ENCODE measurements at regions of chr14 and their contacts with region 1.

Region 1: GRCh38 chr14:36647824-36648753 is 13.6 kb upstream of the PAX9 start:
- DNase-seq: peak in 1 of 2 experiments; percentile 80
- H3K4me3 ChIP-seq: peak overlapping the region; percentile 19 to 64 (median 57); a peak in 7 of 8 replicates
- H3K27ac ChIP-seq: no peak overlapping the region
- H3K4me1 ChIP-seq: peaks cover 0 to 15% (median 7%) of the 10 kb centered on the region in 4 experiments; a peak in 6 of 7 replicates
- H3K27me3 ChIP-seq: peaks cover 73 to 85% (median 82%) of the 10 kb centered on the region in 4 experiments
- CTCF ChIP-seq: peak; percentile 63 to 67 (median 64)
- EP300 ChIP-seq: no peak
- POLR2A ChIP-seq: no peak
- RAD21 ChIP-seq: peak; percentile 75 to 77

Region 2: GRCh38 chr14:36634248-36634647 is 13.8 kb before region 1 on chr14:
- CTCF ChIA-PET with region 1: interaction called, 12 read pairs
- POLR2A ChIA-PET with region 1: no interaction called
- DNase-seq: no peak
- H3K4me3 ChIP-seq: no peak overlapping the region
- H3K27ac ChIP-seq: no peak overlapping the region
- H3K4me1 ChIP-seq: no peaks in the 10 kb centered on the region
- H3K27me3 ChIP-seq: no peaks in the 10 kb centered on the region; a peak in 1 of 7 replicates
- CTCF ChIP-seq: no peak
- EP300 ChIP-seq: no peak
- POLR2A ChIP-seq: no peak
- RAD21 ChIP-seq: no peak

Region 3: DNA sequence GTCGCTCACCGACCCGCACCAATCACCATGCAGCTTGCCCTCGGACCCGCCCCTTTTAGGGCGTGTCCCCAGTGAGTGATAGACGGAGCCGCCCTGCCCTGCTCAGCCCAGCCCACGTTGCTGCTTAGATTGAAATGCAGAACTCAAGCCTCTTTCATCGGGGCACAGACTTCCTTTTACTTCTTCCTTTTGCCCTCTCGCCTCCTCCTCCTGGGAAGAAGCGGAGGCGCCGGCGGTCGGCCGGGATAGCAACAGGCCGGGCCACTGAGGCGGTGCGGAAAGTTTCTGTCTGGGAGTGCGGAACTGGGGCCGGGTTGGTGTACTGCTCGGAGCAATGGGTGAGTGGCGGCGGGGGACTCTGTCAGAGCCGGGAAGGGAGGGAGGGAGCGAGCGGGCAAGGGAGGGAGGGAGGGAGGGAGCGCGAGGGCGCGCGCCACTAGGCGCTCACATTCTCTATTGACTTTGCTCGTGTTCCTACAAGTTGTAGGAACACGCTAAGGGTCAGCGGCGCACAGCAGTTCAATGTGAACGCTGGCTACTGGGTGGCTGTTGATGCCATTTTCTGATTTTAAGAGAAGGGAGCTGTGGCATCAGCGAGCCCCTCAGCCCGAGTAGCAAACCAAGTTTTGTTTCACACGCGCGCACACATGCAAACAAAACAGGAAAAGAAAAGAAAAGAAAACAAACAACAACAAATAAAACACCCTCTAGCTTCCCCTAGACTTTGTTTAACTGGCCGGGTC is 13.8 kb after region 1 on chr14 and contains the start of gene PAX9:
- CTCF ChIA-PET with region 1: interaction called, 132 read pairs
- POLR2A ChIA-PET with region 1: interaction called, 3 read pairs
- DNase-seq: peak; percentile 92 to 96
- H3K4me3 ChIP-seq: peak within 1 kb of the TSS; percentile 25 to 62 (median 38); a peak in 7 of 8 replicates
- H3K27ac ChIP-seq: no peak within 1 kb of the TSS
- H3K4me1 ChIP-seq: peaks cover 4 to 33% (median 22%) of the 10 kb centered on the region in 4 experiments
- H3K27me3 ChIP-seq: peaks cover 91 to 99% (median 94%) of the 10 kb centered on the region in 4 experiments
- CTCF ChIP-seq: no peak
- EP300 ChIP-seq: no peak
- POLR2A ChIP-seq: no peak
- RAD21 ChIP-seq: 0 out of 4 replicates have a peak, but pooled peaks of 1 of the 2 experiments have one; percentile 1
- total RNA-seq, gene PAX9: not detected in 2 replicates

Region 4: DNA sequence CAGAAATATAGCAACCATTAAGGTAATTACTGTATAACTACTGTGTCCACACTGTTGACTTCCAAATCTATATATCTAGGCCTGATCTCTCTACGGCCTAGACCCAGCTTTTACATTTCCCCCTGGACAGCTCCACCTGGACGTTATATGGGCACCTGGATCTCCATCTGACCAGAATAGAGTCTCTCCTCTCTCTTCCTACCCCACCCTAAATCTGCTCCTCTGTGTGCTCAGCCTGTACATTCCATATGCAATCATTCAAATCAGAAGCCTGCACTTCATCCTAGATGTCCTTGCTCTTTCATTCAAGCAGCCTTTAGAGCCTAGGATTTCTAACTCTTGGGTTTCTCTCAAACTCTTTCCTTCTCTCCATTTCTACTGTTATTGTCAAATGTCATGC is 268.6 kb after region 1 on chr14:
- CTCF ChIA-PET with region 1: no interaction called
- POLR2A ChIA-PET with region 1: no interaction called
- DNase-seq: no peak
- H3K4me3 ChIP-seq: no peak overlapping the region
- H3K27ac ChIP-seq: no peak overlapping the region
- H3K4me1 ChIP-seq: 0 out of 7 replicates have a peak, but pooled peaks cover 0 to 2% (median 0%) of the 10 kb centered on the region in 4 experiments
- H3K27me3 ChIP-seq: no peaks in the 10 kb centered on the region
- CTCF ChIP-seq: no peak
- EP300 ChIP-seq: no peak
- POLR2A ChIP-seq: no peak
- RAD21 ChIP-seq: no peak

Measured in H1 (cell line).